ENCODE measurements at regions of chr11 and their contacts with region 1.

Region 1: DNA sequence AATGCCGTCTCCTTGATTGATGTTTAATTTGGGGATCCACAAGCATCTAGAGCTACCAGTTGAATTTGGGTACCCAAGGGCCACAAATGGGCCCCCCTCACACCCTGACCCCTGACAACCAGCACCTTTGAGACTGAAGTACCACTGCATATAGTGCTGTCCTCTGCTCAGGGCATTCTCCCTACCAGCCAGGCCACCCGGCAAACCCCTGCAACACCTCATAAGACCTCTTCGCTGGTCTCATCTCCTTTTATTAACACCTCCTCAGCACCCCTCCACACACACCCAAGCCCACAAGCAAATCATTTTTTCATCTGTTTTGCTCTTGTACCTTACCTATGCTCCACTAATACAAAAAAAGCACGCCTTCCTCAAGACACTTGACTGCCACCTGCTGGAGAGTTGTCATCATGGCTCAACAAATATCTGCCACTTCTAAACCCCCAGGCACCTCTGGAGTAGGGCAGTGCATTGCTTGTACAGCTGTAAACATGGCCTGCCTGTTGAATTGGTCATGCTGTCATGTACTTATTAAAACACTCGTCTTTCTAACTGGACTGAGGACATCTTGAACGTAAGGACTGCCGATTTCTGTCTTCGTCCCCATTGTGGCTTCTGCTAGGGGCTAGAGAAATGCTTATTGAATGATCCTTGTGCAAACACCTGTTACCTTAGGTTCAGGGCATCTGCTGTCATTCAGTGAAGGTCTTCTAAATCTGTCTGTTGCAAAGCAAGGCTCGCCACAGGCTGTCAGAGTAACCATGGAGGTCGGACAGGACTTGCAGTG is 66.5 kb downstream of the BMAL1 start:
- DNase-seq: peak; percentile 47 to 77 (median 54)
- H3K4me3 ChIP-seq: no peak overlapping the region
- H3K4me3 Mint-ChIP-seq: peak overlapping the region in 1 of 7 donors; percentile 5
- H3K27ac ChIP-seq: no peak overlapping the region
- H3K27ac Mint-ChIP-seq: peak overlapping the region in 6 of 8 donors; percentile 2 to 77 (median 36)
- H3K4me1 ChIP-seq: peaks cover 24% of the 10 kb centered on the region
- H3K4me1 Mint-ChIP-seq: peaks cover 65 to 94% (median 81%) of the 10 kb centered on the region in 3 donors
- H3K27me3 ChIP-seq: no peaks in the 10 kb centered on the region
- H3K27me3 Mint-ChIP-seq: no peaks in the 10 kb centered on the region

Region 2: DNA sequence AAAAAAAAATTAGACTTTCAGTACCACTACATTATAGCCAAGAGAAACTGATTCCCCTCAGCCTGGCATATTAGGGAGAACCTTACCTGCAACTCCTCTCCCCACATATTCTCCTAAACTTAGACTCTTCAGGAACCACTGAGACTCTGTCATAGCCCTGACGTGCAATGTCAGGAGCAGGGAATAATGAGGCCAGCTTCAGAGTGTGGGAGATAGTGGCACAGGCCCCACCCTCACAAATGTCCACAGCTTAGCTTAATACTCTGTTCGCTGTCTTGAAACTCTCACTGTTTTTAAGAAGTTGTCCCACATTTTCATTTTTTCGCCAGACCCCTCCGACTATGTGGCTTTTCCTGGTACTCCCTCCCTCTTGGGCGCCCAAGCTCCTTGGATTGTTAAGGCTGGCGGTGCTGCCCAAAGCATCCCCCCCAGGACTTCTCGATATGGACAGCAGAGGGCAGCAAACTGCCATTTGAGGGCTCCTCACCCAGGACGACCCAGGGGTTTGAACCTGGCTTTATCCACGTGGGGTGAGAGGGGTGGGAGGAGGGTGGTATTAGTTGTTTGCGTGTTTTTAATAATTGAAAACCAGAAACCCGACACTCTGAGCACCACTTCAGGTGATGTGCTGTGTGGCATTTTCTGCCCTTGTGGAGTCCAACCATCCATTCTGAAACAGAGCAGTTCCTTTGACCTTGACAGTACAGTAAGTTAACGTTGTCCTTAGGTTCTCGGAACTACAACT is 380.2 kb before region 1 on chr11:
- CTCF ChIA-PET with region 1: interaction called, 12 read pairs
- POLR2A ChIA-PET with region 1: no interaction called
- DNase-seq: peak; percentile 17 to 65 (median 31)
- H3K4me3 ChIP-seq: no peak overlapping the region
- H3K4me3 Mint-ChIP-seq: no peak overlapping the region
- H3K27ac ChIP-seq: no peak overlapping the region
- H3K27ac Mint-ChIP-seq: peak overlapping the region in 1 of 8 donors; percentile 78
- H3K4me1 ChIP-seq: no peaks in the 10 kb centered on the region
- H3K4me1 Mint-ChIP-seq: no peaks in the 10 kb centered on the region
- H3K27me3 ChIP-seq: no peaks in the 10 kb centered on the region
- H3K27me3 Mint-ChIP-seq: peaks cover 7 to 37% of the 10 kb centered on the region in 2 donors

Region 3: DNA sequence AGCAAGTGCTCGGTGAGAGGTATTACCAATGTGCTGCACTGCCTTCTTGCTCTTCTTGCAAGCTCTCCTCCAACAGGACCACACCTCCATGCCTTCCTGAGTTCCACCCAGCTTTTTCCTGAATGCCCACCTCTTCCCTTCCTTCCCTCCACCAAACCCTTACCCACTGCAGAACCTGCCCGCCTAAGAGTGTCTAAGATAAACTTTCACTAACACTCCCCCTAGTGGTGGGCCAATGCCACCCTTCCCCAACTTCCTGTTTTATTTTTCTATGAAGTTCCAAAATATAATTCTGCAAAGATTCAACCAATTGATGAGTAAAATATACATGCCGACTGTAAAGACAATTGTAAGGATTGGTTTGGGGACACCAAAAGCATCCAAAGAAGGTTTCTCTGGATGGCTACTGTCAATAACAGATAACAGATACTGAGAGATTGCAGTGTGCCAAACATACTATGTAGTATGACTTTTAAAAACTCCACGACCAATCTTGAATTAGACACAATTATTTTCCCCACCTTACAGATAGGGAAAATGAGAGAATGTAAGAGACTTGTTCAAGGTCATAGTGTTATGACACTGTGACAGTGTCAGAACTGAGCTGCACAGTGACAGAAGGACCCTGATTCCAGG is 105.1 kb before region 1 on chr11:
- CTCF ChIA-PET with region 1: interaction called, 13 read pairs
- POLR2A ChIA-PET with region 1: no interaction called
- DNase-seq: peak; percentile 18 to 66 (median 39)
- H3K4me3 ChIP-seq: no peak overlapping the region
- H3K4me3 Mint-ChIP-seq: no peak overlapping the region
- H3K27ac ChIP-seq: no peak overlapping the region
- H3K27ac Mint-ChIP-seq: no peak overlapping the region
- H3K4me1 ChIP-seq: no peaks in the 10 kb centered on the region
- H3K4me1 Mint-ChIP-seq: peaks cover 4 to 5% (median 4%) of the 10 kb centered on the region in 3 donors
- H3K27me3 ChIP-seq: no peaks in the 10 kb centered on the region
- H3K27me3 Mint-ChIP-seq: peaks cover 10 to 24% of the 10 kb centered on the region in 2 donors

Measured in CD8-positive, alpha-beta memory T cell (primary cell).